ENCODE measurements at regions of chr11 and their contacts with region 1.

Region 1: DNA sequence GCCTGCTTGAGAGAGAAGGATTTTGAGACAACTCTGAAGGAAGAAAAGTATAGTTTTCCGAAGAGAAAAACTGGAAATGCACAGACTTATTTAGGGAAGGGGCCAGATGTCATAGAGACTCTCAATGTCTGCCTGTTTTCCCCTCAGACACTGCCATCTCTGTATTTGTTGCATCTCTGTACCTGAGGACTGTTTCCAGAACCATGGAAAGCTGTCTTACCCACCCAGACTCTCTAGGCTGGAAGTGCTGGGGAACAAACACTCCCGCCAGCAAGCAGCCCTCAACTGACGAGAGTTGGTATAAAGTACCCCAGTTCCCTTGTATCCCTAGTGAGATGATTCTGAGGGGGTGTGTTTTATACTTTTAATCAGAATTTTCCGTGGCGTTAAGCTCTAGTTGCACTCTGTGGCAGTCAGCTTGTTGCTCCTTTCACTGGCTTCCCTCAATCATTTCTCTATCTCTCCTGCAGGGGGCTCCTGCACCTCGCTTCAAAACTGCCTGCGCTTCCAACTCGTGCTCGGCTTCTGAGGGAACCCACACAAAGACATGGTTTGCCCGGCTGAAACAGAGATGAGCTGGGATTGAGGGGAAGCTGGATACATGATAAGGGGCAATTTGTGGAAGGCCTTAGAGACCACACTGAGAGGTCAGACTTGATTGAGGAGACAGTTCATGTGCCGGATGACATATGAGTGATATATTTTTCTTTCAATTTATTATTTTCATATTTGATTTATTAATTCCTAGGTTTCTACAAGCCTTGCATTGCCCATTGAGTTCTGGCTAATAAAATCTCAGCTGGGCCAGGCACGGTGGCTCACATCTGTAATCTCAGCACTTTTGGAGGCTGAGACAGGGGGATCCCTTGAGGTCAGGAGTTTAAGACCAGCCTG is 36.9 kb upstream of the CLPB start:
- DNase-seq: peak; percentile 78

Region 2: GRCh38 chr11:72446902-72447769 is 24.1 kb before region 1 on chr11:
- CTCF ChIA-PET with region 1: interaction called, 17 read pairs
- POLR2A ChIA-PET with region 1: no interaction called
- DNase-seq: peak; percentile 67

Region 3: DNA sequence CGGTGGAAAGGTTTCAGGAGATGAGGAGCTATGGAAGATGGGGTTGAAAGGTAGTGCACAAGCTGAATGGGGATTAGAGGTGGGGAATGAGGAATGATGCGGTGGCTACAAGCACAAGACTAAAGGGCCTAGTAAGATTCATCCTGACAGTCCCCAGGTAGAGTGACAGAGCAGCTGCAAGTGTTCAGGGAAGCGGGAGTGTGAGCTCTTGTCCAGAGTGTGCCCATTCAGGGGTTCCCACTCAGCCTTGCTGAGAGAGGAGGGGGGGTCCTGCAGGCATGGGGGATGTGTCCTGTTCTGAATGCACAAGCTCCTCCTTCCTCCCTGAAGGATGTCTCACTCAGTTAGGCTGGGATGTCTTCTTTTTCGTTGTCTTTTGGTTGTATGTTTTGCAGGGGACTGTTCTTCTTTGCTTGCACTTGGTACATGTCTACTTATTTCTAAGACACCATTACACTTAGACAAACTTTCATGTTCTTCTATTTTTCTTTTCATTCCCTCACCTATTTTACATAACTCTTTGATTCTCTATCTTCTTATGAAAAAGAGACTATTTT is 11.1 kb before region 1 on chr11:
- CTCF ChIA-PET with region 1: interaction called, 23 read pairs
- POLR2A ChIA-PET with region 1: interaction called, 3 read pairs
- DNase-seq: no peak

Region 4: DNA sequence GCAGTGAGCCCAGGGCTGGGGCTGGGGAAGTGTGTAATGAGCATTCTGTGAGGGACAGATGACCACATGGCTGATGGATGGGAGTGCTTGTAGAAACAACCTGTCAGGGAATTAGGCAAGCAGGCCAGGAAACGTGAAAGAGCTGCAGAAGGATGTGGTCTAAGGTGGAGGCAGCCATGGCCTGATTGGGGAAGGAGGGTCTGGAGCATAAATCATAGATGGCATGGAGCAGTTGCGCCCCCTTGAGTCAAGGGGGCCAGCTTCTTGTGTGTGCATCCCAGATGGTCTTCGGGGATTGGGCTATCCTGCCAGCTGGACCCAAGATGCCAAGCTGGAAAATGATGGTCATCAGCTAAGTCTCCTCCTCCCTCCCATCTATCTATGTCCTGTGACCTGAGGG is 82.5 kb after region 1 on chr11:
- CTCF ChIA-PET with region 1: interaction called, 11 read pairs
- POLR2A ChIA-PET with region 1: no interaction called
- DNase-seq: no peak

Region 5: GRCh38 chr11:72585762-72586311 is 114.6 kb after region 1 on chr11:
- CTCF ChIA-PET with region 1: interaction called, 18 read pairs
- POLR2A ChIA-PET with region 1: no interaction called
- DNase-seq: peak; percentile 85